Sigmoid colon (tissue), 7 donors: ENCODE measurements at regions of chr7 and their contacts with region 1.

Region 1: DNA sequence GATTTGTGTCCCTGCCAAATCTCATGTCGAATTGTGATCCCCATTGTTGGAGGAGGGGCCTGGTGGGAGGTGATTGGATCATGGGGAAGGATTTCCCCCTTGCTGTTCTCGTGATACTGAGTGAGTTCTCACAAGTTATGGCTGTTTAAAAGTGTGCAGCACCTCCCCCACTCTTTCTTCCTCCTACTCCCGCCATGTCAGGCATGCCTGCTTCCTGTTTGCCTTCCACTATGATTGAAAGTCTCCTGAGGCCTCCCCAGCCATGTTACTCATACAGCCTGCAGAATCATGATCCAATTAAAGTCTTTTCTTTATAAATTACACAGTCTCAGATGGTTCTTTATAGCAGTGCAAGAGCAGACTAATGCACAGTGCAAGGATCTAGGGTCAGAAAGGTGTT is 75.4 kb downstream of the CALD1 start:
- DNase-seq: no peak
- H3K4me3 ChIP-seq: no peak overlapping the region
- H3K27ac ChIP-seq: peak overlapping the region; percentile 67 to 94 (median 72)
- H3K4me1 ChIP-seq: peaks cover 0 to 96% (median 82%) of the 10 kb centered on the region in 4 donors
- H3K27me3 ChIP-seq: no peaks in the 10 kb centered on the region
- CTCF ChIP-seq: no peak
- EP300 ChIP-seq: no peak
- POLR2A ChIP-seq: no peak

Region 2: GRCh38 chr7:134891262-134891695 is 36.5 kb after region 1 on chr7:
- intact Hi-C with region 1: loop called (anchors 5 kb)
- DNase-seq: peak; percentile 94
- H3K4me3 ChIP-seq: peak overlapping the region; percentile 30 to 41 (median 40)
- H3K27ac ChIP-seq: peak overlapping the region; percentile 78 to 88 (median 80)
- H3K4me1 ChIP-seq: peaks cover 0 to 79% (median 66%) of the 10 kb centered on the region in 4 donors
- H3K27me3 ChIP-seq: no peaks in the 10 kb centered on the region
- CTCF ChIP-seq: no peak
- EP300 ChIP-seq: peak in 2 of 4 donors; percentile 50 to 56
- POLR2A ChIP-seq: no peak

Region 3: GRCh38 chr7:134919240-134919641 is 64.4 kb after region 1 on chr7:
- intact Hi-C with region 1: loop called (anchors 5 kb)
- DNase-seq: no peak
- H3K4me3 ChIP-seq: no peak overlapping the region
- H3K27ac ChIP-seq: peak overlapping the region; percentile 52 to 88 (median 80)
- H3K4me1 ChIP-seq: peaks cover 0 to 92% (median 84%) of the 10 kb centered on the region in 4 donors
- H3K27me3 ChIP-seq: no peaks in the 10 kb centered on the region
- CTCF ChIP-seq: no peak
- EP300 ChIP-seq: peak in 2 of 4 donors; percentile 4 to 73
- POLR2A ChIP-seq: no peak